HCT116 (cell line): ENCODE measurements at regions of chr17 and their contacts with region 1.

Region 1: GRCh38 chr17:8118769-8119580 is 661 bp upstream of the ALOXE3 start:
- DNase-seq: peak; percentile 65
- ATAC-seq: peak; percentile 61
- H3K4me3 ChIP-seq: peak overlapping the region; percentile 52 to 59
- H3K27ac ChIP-seq: peak overlapping the region; percentile 83
- H3K4me1 ChIP-seq: peaks cover 22 to 66% of the 10 kb centered on the region in 2 experiments
- H3K27me3 ChIP-seq: no peaks in the 10 kb centered on the region
- CTCF ChIP-seq: peak; percentile 65 to 83 (median 79); a peak in 5 of 6 replicates
- POLR2A ChIP-seq: no peak
- RAD21 ChIP-seq: peak; percentile 58

Region 2: GRCh38 chr17:8073627-8074484 is 45.1 kb before region 1 on chr17:
- CTCF ChIA-PET with region 1: interaction called, 18 read pairs
- POLR2A ChIA-PET with region 1: no interaction called
- RAD21 ChIA-PET with region 1: interaction called in 1 of 2 experiments, 3 read pairs
- intact Hi-C with region 1: loop called (anchors 5 kb)
- DNase-seq: peak; percentile 44
- ATAC-seq: peak; percentile 96
- H3K4me3 ChIP-seq: peak overlapping the region; percentile 1 to 41; a peak in 3 of 4 replicates
- H3K27ac ChIP-seq: no peak overlapping the region
- H3K4me1 ChIP-seq: peaks cover 0 to 16% of the 10 kb centered on the region in 2 experiments; a peak in 2 of 4 replicates
- H3K27me3 ChIP-seq: peaks cover 4% of the 10 kb centered on the region; the same call in 1 of the 2 replicates
- CTCF ChIP-seq: peak; percentile 70 to 97 (median 92)
- POLR2A ChIP-seq: no peak
- RAD21 ChIP-seq: peak; percentile 58

Region 3: DNA sequence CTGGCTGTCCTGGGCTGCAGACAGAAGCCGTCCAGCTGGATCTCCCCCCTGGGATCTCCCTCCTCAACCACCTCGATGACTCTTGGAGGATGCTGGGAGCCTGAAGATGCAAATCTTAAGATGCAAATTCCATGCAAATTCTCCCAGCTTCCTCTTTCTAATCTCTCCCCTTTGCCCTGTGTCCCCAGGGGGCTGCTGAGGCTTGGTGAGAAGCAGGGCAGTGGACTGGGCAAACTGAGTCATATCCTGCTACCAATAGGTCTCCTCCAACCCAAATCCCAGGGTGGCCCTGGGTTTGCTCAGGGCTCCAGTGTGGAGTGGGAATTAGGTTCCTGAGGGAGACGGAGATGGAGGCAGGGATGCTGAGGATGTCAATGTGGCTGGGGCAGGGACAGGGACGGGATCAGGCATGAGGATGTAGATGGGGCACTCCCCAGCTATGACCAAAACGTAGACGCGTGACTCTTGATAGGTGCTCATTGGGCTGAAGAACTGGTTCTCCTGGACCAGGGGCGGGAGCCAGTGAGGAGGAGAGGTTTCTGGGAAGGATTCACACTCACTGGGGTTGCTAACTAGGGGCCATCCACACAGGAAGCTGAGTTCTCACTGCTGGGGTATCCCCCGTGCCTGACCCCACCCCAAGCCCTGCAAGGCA is 27.8 kb before region 1 on chr17:
- CTCF ChIA-PET with region 1: interaction called, 26 read pairs
- POLR2A ChIA-PET with region 1: interaction called, 5 read pairs
- RAD21 ChIA-PET with region 1: no interaction called
- intact Hi-C with region 1: no loop called
- DNase-seq: no peak
- ATAC-seq: no peak
- H3K4me3 ChIP-seq: no peak overlapping the region
- H3K27ac ChIP-seq: no peak overlapping the region
- H3K4me1 ChIP-seq: peaks cover 2 to 11% of the 10 kb centered on the region in 2 experiments; a peak in 2 of 4 replicates
- H3K27me3 ChIP-seq: no peaks in the 10 kb centered on the region
- CTCF ChIP-seq: no peak
- POLR2A ChIP-seq: no peak
- RAD21 ChIP-seq: no peak

Region 4: DNA sequence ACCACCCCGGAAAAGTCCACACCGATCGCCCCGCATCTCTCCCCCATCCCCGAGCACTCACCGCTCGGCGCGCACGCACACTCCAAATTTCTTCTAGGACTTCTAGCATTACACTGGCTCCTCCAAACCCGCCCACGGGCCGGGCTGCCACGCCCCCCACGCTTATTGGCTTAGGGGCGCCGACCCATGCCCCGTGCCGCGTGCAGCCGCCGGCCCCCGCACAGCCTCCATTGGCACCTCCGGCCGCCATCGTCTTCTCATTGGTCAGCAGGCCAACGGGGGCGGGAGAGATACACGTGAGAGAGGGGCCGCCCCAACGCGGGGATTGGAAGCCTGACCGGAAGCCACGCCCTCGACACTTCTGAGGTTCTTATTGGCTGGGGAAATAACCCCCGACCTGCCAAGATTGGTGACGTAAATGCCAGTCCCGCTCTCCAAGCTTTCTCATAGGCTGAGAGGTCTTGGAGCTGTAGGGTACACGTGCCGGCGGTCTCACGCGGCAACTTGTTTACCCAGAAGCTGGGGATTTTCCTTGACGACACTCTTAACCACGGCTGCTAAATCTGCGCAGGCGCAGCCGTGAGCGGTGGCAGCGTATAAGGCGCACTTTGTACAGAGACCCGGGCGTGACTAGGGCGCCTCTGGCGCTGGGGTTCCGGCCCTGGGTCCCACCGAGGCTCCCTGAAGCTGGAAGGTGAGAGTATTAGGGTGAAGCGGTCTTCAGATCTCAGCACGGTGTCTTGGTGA is 37.4 kb after region 1 on chr17:
- CTCF ChIA-PET with region 1: interaction called, 6 read pairs
- POLR2A ChIA-PET with region 1: interaction called, 17 read pairs
- RAD21 ChIA-PET with region 1: no interaction called
- intact Hi-C with region 1: loop called (anchors 2 kb)
- DNase-seq: peak; percentile 100
- ATAC-seq: peak; percentile 66
- H3K4me3 ChIP-seq: peak overlapping the region; percentile 87 to 95
- H3K27ac ChIP-seq: peak overlapping the region; percentile 72
- H3K4me1 ChIP-seq: peaks cover 49 to 94% of the 10 kb centered on the region in 2 experiments
- H3K27me3 ChIP-seq: no peaks in the 10 kb centered on the region
- CTCF ChIP-seq: no peak
- POLR2A ChIP-seq: peak; percentile 41
- RAD21 ChIP-seq: no peak

Region 5: GRCh38 chr17:8222630-8223356 is 103.8 kb after region 1 on chr17:
- CTCF ChIA-PET with region 1: interaction called, 7 read pairs
- POLR2A ChIA-PET with region 1: interaction called, 16 read pairs
- RAD21 ChIA-PET with region 1: interaction called in 1 of 2 experiments, 3 read pairs
- intact Hi-C with region 1: loop called (anchors 1 kb)
- DNase-seq: peak; percentile 87
- ATAC-seq: peak; percentile 47
- H3K4me3 ChIP-seq: peak overlapping the region; percentile 82 to 86
- H3K27ac ChIP-seq: peak overlapping the region; percentile 83
- H3K4me1 ChIP-seq: peaks cover 51 to 94% of the 10 kb centered on the region in 2 experiments
- H3K27me3 ChIP-seq: no peaks in the 10 kb centered on the region
- CTCF ChIP-seq: no peak
- POLR2A ChIP-seq: peak; percentile 44
- RAD21 ChIP-seq: no peak

Region 6: DNA sequence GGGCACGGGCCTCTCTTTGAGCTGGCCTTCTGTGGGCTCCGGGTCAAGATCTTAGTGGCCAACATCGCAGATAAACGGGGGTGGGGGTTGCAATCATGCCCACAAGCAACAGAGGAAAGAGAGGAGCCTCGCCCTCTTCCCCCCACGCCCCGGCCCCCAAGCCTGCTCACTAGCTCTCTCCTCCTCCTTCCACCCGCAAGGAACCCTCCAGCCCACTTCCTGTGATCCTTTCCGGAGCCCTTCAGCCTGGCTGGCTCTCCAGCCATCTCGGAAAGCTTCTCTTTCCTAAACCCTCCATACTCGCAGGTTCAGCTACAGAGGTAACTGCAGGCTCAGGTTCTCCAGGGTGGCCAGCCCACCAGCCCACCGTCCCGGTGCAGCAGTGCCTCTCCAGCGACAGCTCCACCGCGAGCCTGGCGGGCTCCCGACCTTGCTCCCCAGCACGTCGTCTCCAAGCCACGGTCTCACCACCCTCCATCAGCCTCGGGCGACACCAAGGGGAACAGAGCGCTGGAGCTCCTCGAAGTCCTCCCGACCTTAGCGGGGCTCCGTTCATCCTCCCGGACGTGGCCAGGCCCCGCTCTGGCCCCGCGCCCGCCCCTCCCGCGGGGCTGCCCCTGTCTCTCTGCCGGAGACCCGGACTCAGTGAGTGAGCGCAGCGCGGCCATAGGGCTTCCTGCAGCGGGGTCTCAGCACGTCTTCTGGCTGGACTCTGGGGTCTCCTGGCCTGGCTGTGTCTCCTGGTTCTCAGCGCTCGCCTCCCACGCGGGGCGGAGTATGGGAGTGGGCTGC is 207.7 kb after region 1 on chr17:
- CTCF ChIA-PET with region 1: no interaction called
- POLR2A ChIA-PET with region 1: no interaction called
- RAD21 ChIA-PET with region 1: no interaction called
- intact Hi-C with region 1: no loop called
- DNase-seq: no peak
- ATAC-seq: no peak
- H3K4me3 ChIP-seq: no peak overlapping the region
- H3K27ac ChIP-seq: no peak overlapping the region
- H3K4me1 ChIP-seq: no peaks in the 10 kb centered on the region
- H3K27me3 ChIP-seq: no peaks in the 10 kb centered on the region
- CTCF ChIP-seq: no peak
- POLR2A ChIP-seq: no peak
- RAD21 ChIP-seq: no peak

Region 7: DNA sequence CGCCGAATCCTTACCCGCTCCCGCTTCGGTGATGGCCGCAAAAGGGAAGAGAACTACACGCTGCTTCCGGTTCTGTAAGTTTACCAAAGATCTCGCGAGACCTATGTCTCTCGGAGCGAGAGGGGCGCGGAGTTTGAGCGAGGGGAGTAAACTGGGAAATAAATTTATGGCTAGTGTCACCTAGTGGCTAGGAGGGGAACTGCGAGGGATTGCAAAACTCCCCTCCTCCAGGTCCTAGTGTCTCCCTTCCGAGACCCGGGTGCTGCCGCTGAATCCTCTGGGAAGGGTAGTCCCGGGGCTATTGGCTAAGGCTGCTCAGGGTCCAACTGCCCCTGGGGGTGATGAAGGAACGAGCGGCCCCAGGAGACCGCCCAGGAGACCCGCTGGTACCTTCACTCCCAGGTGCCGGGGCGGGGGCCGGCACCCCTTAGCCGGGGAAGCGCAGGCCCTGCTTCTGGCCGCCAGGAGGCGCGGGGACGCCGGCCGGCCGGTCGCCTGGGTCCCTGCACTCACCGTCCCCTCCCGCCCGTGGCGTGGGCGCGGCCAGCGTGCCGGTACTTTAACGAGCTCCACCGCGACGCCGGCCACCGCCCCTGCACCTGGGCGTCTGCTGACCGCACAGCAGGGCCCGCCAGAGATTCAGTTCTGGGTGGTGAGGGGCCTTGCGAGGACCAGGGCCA is 264.3 kb after region 1 on chr17 and contains the start of gene RPL26:
- CTCF ChIA-PET with region 1: no interaction called
- POLR2A ChIA-PET with region 1: no interaction called
- RAD21 ChIA-PET with region 1: no interaction called
- intact Hi-C with region 1: loop called (anchors 10 kb)
- DNase-seq: peak; percentile 97
- ATAC-seq: peak; percentile 88
- H3K4me3 ChIP-seq: peak within 1 kb of the TSS; percentile 85 to 98
- H3K27ac ChIP-seq: peak within 1 kb of the TSS; percentile 96
- H3K4me1 ChIP-seq: peaks cover 20 to 44% of the 10 kb centered on the region in 2 experiments
- H3K27me3 ChIP-seq: no peaks in the 10 kb centered on the region
- CTCF ChIP-seq: peak; percentile 62 to 98 (median 96)
- POLR2A ChIP-seq: peak; percentile 86
- RAD21 ChIP-seq: peak; percentile 70
- total RNA-seq, gene RPL26: 2,603 TPM